Common myeloid progenitor, CD34-positive (primary cell): ENCODE measurements at regions of chr2 and their contacts with region 1.

Region 1: DNA sequence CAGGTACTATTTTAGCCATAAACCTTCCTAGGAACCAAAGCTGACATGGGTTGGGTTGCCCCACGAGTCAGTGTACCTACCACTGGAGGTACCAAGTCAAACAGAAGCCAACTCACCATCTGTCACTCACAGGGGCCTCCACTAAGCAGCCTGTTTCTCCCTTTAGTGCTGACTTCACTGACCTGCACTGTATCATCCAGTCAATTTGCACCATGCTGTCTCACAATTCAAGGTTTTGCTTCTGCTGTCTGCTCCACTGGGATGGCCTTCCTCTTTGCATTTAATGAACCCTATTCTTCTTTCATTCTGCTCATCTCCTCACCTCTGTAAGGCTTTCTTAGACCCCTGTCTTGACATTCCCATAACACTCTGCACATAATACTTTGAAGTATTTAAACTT is 47.2 kb downstream of the EIF2AK3 start:
- DNase-seq: no peak
- H3K4me3 ChIP-seq: no peak overlapping the region
- H3K27ac ChIP-seq: no peak overlapping the region
- H3K4me1 ChIP-seq: no peaks in the 10 kb centered on the region
- H3K27me3 ChIP-seq: no peaks in the 10 kb centered on the region

Region 2: DNA sequence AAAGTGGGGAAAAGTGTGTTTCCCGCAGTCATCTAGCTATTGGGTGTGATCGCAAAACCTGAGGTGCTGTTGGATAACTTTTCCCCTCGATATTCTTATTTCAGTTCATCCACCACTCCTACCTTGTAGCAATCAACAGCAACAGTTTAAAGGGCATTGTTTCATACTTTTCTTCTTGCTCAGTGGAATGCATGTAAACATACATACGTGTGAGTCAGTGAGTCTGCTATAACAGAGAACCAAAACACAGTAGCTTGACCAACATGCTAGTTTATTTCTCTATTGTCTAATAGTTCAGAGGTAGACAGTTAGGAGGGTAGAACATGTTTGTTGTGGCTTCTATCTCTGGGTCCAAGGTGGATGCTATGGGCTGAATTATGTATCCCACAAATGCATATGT is 50.0 kb before region 1 on chr2:
- CTCF ChIA-PET with region 1: no interaction called
- POLR2A ChIA-PET with region 1: no interaction called
- DNase-seq: no peak
- H3K4me3 ChIP-seq: no peak overlapping the region
- H3K27ac ChIP-seq: no peak overlapping the region
- H3K4me1 ChIP-seq: no peaks in the 10 kb centered on the region
- H3K27me3 ChIP-seq: peaks cover 0 to 2% (median 0%) of the 10 kb centered on the region in 5 experiments

Region 3: DNA sequence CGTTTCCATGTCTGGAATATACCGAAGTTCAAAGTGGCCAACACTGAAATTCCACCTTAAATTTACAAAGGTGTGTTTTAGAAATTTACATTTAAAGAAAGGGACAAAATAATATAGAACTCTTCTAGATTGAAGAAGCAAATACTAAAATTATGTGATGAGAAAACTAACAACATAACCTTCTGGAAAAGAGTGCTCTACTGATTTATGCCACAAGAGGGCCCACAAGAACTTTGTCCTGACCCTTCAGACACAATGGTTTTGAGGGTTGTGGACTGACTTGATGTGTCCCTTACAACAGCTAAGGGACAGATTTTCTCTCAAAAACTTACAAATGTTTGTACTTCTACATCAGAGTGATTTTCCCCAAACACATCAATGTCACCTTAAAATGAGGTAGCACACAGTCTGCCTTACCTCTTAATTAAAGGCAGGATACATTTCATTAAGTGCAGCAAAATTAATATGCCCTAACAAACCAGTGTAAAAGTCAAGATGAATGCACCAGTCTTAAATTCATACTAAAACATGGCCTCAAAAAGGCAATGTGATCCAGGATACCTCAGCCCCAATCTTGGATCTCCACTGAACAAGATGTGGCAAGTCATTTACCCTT is 11.0 kb after region 1 on chr2:
- CTCF ChIA-PET with region 1: interaction called, 10 read pairs
- POLR2A ChIA-PET with region 1: no interaction called
- DNase-seq: peak; percentile 66 to 82 (median 75)
- H3K4me3 ChIP-seq: no peak overlapping the region
- H3K27ac ChIP-seq: no peak overlapping the region
- H3K4me1 ChIP-seq: no peaks in the 10 kb centered on the region
- H3K27me3 ChIP-seq: no peaks in the 10 kb centered on the region